GM12878 (cell line): ENCODE measurements at regions of chr11 and their contacts with region 1.

Region 1: GRCh38 chr11:10322830-10323792 is 18.2 kb downstream of the ADM start:
- DNase-seq: no peak
- ATAC-seq: peak; percentile 84
- H3K4me3 ChIP-seq: no peak overlapping the region
- H3K27ac ChIP-seq: no peak overlapping the region
- H3K4me1 ChIP-seq: peaks cover 8% of the 10 kb centered on the region
- H3K27me3 ChIP-seq: 0 out of 4 replicates have a peak, but pooled peaks cover 0 to 1% of the 10 kb centered on the region in 2 experiments
- CTCF ChIP-seq: peak; percentile 19 to 55 (median 51); a peak in 5 of 6 replicates
- EP300 ChIP-seq: no peak
- POLR2A ChIP-seq: no peak
- RAD21 ChIP-seq: peak; percentile 82

Region 2: DNA sequence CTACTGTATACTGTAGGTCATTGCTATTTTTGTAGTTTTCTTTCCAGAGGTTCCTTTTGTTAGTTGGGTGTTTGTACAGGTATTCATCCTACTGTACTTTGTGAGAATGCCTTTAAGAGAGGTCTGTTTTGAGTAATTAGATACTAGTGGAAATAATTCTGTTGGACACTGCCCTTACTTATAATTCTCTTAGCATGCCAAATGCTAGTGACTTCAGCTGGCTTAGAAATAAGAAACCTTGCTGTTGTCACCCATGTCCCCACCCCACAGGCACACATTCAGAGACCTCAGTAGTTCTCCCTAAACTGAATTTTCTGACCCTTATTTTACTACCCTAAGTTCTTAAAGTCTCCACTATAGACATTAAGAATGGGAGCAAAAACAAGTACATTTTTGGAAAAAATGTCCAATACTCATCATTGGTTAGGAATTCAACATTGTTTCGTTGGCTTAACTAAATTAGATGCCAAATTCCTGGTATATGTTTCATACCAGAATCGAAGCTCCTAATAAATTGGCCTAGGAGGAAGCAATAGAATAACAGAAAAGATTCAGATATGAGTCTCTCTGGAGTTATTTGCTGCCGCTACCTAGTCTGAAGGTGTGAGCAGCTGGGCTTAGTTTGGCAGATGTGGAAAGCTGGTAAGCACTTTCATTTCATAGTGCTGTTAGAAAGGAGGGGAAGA is 833.9 kb before region 1 on chr11:
- CTCF ChIA-PET with region 1: no interaction called
- POLR2A ChIA-PET with region 1: no interaction called
- RAD21 ChIA-PET with region 1: no interaction called
- SMC1A ChIA-PET with region 1: no interaction called
- in situ Hi-C with region 1: no loop called
- intact Hi-C with region 1: no loop called
- DNase-seq: no peak
- ATAC-seq: no peak
- H3K4me3 ChIP-seq: no peak overlapping the region
- H3K27ac ChIP-seq: no peak overlapping the region
- H3K4me1 ChIP-seq: no peaks in the 10 kb centered on the region
- H3K27me3 ChIP-seq: no peaks in the 10 kb centered on the region
- CTCF ChIP-seq: no peak
- EP300 ChIP-seq: no peak
- POLR2A ChIP-seq: no peak
- RAD21 ChIP-seq: no peak

Region 3: DNA sequence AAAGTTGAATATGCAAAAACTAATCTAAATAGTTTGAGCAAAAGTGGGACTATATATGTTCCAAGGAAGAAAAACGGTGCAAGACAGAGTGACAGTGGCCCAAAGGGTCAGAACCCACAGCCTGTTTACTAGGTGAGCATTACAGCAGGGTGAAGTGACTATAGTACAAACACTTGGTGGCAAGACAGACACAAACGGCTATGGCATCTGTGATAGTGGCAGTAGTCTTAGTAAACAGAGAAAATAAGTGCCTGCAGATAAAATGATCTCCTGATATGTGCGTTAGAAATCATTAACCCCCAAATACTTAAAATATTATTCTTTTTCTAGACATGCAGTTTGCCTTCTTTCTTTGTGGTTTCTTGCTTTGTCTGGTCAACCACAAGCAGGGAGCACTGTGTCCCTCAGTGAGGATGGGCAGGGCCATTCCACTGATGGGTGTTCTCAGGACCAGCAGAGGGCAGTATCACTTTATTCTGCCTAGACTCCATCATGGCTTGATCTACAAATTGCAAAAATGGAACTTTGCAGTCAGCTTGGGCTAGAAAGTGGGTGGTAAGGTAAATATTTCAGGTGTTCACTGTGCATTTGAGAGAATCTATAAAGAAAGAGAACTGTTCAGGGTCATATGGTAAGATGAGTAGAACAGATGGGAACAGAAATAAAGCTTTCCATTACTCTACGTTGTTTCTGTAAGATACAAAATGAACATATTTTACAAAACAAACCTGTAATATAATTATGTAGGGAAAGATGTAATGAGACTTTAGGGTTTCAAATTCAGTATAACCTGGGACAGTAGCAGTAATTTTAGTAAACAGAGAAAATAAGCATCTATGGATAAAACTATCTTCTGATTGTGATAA is 461.0 kb before region 1 on chr11:
- CTCF ChIA-PET with region 1: interaction called, 6 read pairs
- POLR2A ChIA-PET with region 1: no interaction called
- RAD21 ChIA-PET with region 1: interaction called, 3 read pairs
- SMC1A ChIA-PET with region 1: interaction called, 6 read pairs
- in situ Hi-C with region 1: loop called (anchors 5 kb)
- intact Hi-C with region 1: loop called (anchors 5 kb)
- DNase-seq: peak; percentile 31
- ATAC-seq: peak; percentile 100
- H3K4me3 ChIP-seq: no peak overlapping the region
- H3K27ac ChIP-seq: no peak overlapping the region
- H3K4me1 ChIP-seq: no peaks in the 10 kb centered on the region
- H3K27me3 ChIP-seq: no peaks in the 10 kb centered on the region; a peak in 1 of 4 replicates
- CTCF ChIP-seq: peak; percentile 78 to 89 (median 85)
- EP300 ChIP-seq: no peak
- POLR2A ChIP-seq: no peak
- RAD21 ChIP-seq: peak; percentile 88

Region 4: GRCh38 chr11:9972989-9973388 is 350.1 kb before region 1 on chr11:
- CTCF ChIA-PET with region 1: interaction called, 3 read pairs
- POLR2A ChIA-PET with region 1: no interaction called
- RAD21 ChIA-PET with region 1: interaction called, 4 read pairs
- SMC1A ChIA-PET with region 1: no interaction called
- in situ Hi-C with region 1: no loop called
- intact Hi-C with region 1: loop called (anchors 5 kb)
- DNase-seq: no peak
- ATAC-seq: peak; percentile 85
- H3K4me3 ChIP-seq: no peak overlapping the region
- H3K27ac ChIP-seq: no peak overlapping the region
- H3K4me1 ChIP-seq: no peaks in the 10 kb centered on the region
- H3K27me3 ChIP-seq: no peaks in the 10 kb centered on the region
- CTCF ChIP-seq: peak; percentile 62 to 75 (median 75)
- EP300 ChIP-seq: no peak
- POLR2A ChIP-seq: no peak
- RAD21 ChIP-seq: peak; percentile 93

Region 5: DNA sequence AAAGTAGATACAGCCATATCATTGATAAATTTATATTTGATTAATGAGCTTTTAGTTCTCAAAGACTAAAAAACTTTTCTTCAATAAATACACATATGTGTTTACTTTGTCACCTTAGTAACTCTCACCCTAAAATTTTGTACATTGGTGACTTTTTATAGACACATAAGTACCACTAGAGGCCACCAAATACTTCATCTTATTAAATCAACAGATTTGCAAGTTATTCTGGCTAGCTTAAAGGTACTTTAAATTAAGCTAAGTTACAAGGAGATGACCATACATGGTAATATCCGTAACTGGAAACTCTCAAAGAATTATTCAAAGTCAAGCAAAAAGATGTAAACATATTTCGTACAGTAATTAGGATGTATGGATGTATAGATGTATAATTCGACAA is 141.3 kb before region 1 on chr11:
- CTCF ChIA-PET with region 1: interaction called, 11 read pairs
- POLR2A ChIA-PET with region 1: no interaction called
- RAD21 ChIA-PET with region 1: interaction called, 3 read pairs
- SMC1A ChIA-PET with region 1: interaction called, 13 read pairs
- in situ Hi-C with region 1: no loop called
- intact Hi-C with region 1: no loop called
- DNase-seq: no peak
- ATAC-seq: no peak
- H3K4me3 ChIP-seq: no peak overlapping the region
- H3K27ac ChIP-seq: no peak overlapping the region
- H3K4me1 ChIP-seq: no peaks in the 10 kb centered on the region
- H3K27me3 ChIP-seq: no peaks in the 10 kb centered on the region
- CTCF ChIP-seq: no peak; a peak in 1 of 6 replicates
- EP300 ChIP-seq: no peak
- POLR2A ChIP-seq: no peak
- RAD21 ChIP-seq: peak; percentile 34

Region 6: DNA sequence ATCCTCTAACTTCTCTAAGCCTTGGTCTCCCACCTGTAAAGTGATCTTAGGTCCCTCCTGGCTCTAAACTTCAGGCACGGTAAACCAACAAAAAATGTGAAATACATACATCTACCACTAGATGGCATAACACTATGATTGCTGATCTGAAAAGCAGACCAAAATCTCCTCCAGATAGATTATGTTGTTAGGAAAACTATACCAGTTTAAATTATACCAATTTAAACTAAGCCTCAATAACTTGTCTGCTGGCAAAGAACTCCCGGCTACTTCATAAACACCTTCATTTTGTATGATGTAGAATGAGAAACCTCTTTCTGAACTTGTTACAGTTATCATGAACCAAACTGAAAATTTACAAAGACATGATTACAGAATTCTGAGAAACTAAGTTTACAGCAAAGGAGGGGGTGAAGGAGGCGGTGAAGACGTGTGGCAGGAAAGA is 115.0 kb before region 1 on chr11:
- CTCF ChIA-PET with region 1: interaction called, 52 read pairs
- POLR2A ChIA-PET with region 1: interaction called, 3 read pairs
- RAD21 ChIA-PET with region 1: interaction called, 10 read pairs
- SMC1A ChIA-PET with region 1: interaction called, 55 read pairs
- in situ Hi-C with region 1: loop called (anchors 5 kb)
- intact Hi-C with region 1: loop called (anchors 1 kb)
- DNase-seq: peak; percentile 32
- ATAC-seq: peak; percentile 71
- H3K4me3 ChIP-seq: no peak overlapping the region
- H3K27ac ChIP-seq: no peak overlapping the region
- H3K4me1 ChIP-seq: no peaks in the 10 kb centered on the region
- H3K27me3 ChIP-seq: peaks cover 0 to 5% of the 10 kb centered on the region in 2 experiments; a peak in 2 of 4 replicates
- CTCF ChIP-seq: peak; percentile 56 to 59 (median 56); a peak in 5 of 6 replicates
- EP300 ChIP-seq: no peak
- POLR2A ChIP-seq: no peak
- RAD21 ChIP-seq: peak; percentile 59

Region 7: DNA sequence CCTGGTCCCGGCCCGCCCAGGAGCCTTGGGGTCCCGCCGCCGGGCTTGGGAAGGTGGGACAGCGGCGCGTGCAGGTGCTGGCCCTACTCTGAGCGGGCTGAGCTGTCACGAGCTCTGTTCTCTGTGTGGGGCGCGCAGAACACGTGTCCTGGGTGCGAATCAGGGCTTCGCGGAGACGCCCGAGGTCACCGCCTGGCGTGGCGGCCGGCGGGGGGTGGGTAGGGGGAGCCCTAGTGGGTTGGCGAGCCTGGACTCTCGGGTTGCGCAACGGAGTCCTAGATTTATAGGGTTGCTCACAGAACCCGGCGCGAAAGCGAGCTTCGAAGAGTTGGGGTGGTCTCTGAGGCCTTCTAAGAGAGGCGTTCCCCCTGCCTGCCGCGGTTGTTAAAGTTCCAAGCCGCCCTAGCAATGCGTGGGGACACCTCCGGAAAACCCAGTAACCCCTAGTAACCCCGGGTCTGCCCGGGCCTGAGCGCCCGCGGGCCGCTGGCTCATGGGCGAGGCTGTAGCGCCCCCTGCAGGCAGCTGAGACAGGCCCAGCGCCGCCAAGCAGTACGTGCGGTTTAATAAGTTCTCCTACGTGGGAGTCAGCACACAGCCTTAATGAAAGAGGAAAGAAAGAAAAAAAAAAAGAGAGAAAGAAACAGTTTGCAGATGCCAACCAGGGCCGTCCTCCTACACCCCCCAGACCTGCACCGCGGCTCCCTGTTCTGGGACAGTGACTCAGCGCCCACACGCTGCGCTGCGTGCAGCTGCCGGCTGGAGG is 15.5 kb before region 1 on chr11:
- CTCF ChIA-PET with region 1: interaction called, 48 read pairs
- POLR2A ChIA-PET with region 1: interaction called, 8 read pairs
- RAD21 ChIA-PET with region 1: interaction called, 24 read pairs
- SMC1A ChIA-PET with region 1: interaction called, 32 read pairs
- in situ Hi-C with region 1: no loop called
- intact Hi-C with region 1: no loop called
- DNase-seq: peak; percentile 60
- ATAC-seq: peak; percentile 84
- H3K4me3 ChIP-seq: peak overlapping the region; percentile 48; the same call in 1 of the 2 replicates
- H3K27ac ChIP-seq: peak overlapping the region; percentile 20; the same call in 1 of the 2 replicates
- H3K4me1 ChIP-seq: peaks cover 47% of the 10 kb centered on the region
- H3K27me3 ChIP-seq: peaks cover 32 to 41% of the 10 kb centered on the region in 2 experiments
- CTCF ChIP-seq: peak; percentile 78 to 89 (median 87)
- EP300 ChIP-seq: 0 out of 4 replicates have a peak, but pooled peaks of 1 of the 2 experiments have one; percentile 16
- POLR2A ChIP-seq: no peak; the same call in 1 of the 2 replicates
- RAD21 ChIP-seq: peak; percentile 86

Region 8: DNA sequence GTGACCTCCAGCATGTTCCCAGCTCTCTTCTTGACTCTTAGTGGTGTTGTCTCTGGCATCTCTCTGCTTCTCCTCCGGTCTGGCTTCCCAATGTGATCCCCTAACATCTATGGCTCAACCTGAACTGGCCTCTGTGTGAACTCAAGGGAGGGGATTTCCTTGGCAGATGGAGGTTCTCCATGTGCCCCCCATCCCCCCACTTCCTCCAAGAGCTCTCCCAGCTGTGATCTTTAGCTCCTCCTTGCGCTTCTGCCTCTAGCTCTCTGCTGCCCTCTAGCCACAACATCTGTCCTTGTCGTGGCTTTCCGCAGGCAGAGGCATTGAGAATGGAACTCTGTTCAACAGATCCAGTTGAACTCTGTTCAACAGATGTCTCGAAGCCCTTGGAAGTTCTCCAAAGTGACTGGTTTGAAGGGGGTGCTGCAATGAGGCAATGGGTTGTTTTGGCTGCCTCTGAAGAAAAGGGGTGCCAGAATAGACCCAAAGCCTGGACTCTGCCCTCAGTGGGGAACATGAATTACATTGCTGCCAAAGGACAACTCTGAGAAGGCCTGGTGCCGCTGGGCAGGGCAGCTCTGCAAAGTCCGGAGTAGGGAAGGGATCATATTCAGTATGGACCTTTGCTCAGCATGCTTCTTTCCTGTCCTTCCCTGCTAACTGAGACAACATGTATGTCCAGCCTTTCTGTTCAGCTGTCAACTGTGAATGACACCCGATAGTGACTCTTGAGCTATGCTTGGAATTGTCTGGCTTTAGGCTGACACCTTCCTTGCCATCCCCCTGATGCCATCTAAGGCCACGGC is 43.7 kb after region 1 on chr11:
- CTCF ChIA-PET with region 1: interaction called, 33 read pairs
- POLR2A ChIA-PET with region 1: no interaction called
- RAD21 ChIA-PET with region 1: interaction called, 8 read pairs
- SMC1A ChIA-PET with region 1: interaction called, 17 read pairs
- in situ Hi-C with region 1: no loop called
- intact Hi-C with region 1: no loop called
- DNase-seq: peak; percentile 57
- ATAC-seq: peak; percentile 98
- H3K4me3 ChIP-seq: no peak overlapping the region
- H3K27ac ChIP-seq: no peak overlapping the region
- H3K4me1 ChIP-seq: no peaks in the 10 kb centered on the region; the same call in 1 of the 2 replicates
- H3K27me3 ChIP-seq: no peaks in the 10 kb centered on the region
- CTCF ChIP-seq: peak; percentile 85 to 92 (median 91)
- EP300 ChIP-seq: peak in 1 of 2 experiments; percentile 37; a peak in 1 of 4 replicates
- POLR2A ChIP-seq: no peak
- RAD21 ChIP-seq: peak; percentile 75